Sigmoid colon (tissue), 7 donors: ENCODE measurements at regions of chr5 and their contacts with region 1.

Region 1: DNA sequence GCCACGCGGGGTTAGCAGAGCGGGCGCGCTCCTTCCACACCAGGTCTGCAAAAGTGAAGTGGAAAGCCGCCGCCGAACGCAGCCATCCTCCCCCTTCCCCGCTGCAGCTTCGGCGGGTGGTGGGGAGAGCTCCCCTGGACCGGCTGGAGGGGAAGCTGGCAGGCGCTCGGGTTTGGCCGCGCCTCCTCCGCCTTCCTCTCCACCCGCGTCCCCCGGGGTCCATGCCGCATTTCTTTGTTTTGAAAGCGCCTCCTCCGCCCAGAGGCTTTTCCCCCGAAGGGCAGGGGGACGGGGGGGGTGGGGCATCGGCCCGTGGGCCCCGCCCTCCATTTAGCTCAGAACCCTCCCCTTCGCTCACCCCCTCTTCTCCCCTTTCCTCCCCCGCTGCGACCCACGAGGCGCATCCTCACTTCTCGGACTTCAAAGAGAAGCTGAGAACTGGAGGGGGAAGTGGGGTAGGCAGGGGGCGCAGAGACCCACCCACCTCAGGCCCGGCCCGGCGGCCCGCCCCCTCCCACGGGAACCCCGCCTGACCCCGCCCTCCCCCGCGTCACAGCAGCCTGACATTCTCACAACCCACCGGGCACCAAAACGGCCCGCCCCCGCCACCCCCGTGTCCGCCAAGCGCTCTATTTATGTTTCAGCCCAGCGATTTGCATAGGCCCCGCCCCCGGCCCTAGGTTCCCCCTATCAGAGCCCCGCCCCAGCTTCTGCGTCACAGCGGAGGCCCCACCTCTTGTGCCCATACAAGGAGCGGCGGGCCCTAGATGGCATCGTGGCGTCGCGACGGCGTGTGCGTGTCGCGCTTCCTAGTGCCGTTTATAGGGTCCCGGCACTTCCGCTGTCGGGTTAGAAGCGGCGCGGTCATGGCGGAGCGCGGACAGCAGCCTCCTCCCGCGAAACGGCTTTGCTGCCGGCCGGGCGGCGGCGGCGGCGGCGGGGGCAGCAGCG is at the start of gene ZSWIM6:
- DNase-seq: peak; percentile 100
- H3K4me3 ChIP-seq: peak within 1 kb of the TSS; percentile 83 to 99 (median 97)
- H3K27ac ChIP-seq: peak within 1 kb of the TSS; percentile 91 to 99 (median 94)
- H3K4me1 ChIP-seq: peaks cover 0 to 52% (median 37%) of the 10 kb centered on the region in 4 donors
- H3K27me3 ChIP-seq: no peaks in the 10 kb centered on the region
- CTCF ChIP-seq: no peak
- EP300 ChIP-seq: peak in 2 of 4 donors; percentile 15 to 18
- POLR2A ChIP-seq: peak; percentile 82 to 90
- total RNA-seq, gene ZSWIM6: 11.3 to 17.7 (median 13.3) TPM

Region 2: GRCh38 chr5:60883229-60883628 is 448.5 kb before region 1 on chr5:
- intact Hi-C with region 1: no loop called
- DNase-seq: no peak
- H3K4me3 ChIP-seq: no peak overlapping the region
- H3K27ac ChIP-seq: no peak overlapping the region
- H3K4me1 ChIP-seq: no peaks in the 10 kb centered on the region
- H3K27me3 ChIP-seq: no peaks in the 10 kb centered on the region
- CTCF ChIP-seq: no peak
- EP300 ChIP-seq: no peak
- POLR2A ChIP-seq: no peak

Region 3: DNA sequence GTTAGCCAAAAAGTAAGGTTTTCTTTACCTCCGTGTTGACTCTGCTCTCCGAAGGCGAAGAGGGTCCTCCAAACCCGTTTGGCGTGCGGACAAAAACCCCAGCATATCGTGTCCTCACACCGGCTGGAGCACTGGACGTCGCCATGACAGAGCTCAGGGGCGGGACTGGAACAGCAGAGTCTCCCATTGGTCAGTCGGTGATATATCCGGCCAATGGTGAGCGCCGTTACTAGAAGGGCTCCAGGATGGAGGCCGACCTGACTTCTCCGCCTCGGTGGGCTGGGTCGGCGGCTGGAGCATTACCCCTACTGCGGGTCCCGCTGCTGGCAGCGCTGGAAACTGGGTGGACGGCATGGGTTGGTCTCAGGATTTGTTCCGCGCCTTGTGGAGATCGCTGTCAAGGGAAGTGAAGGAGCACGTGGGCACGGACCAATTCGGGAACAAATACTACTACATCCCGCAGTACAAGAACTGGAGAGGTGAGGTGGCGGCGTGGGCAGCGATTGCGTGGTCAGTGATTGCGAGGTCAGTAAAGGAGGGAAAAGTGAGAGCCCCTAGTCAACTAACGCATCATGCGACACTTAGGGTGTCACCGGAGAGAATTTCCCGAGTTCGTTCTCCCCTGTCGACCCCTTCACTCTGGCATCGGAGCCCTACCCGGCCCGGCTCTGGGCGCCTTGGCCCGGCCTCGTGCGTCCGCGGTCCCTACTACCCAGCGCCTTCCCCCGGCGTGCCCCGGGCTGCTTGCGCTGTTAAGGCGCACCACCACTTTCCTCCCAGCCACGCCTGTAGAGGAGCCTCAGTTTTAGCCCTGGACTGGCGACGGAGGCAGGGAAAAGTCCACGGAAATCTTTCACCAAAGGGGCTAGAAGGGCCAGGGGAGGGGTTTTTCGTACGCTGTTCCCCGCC is 386.5 kb before region 1 on chr5 and contains the starts of genes ERCC8 and NDUFAF2:
- intact Hi-C with region 1: loop called (anchors 5 kb)
- DNase-seq: peak; percentile 95
- H3K4me3 ChIP-seq: peak within 1 kb of the TSS; percentile 65 to 75 (median 71)
- H3K27ac ChIP-seq: peak within 1 kb of the TSS; percentile 85 to 87 (median 86)
- H3K4me1 ChIP-seq: peaks cover 0 to 25% (median 18%) of the 10 kb centered on the region in 4 donors
- H3K27me3 ChIP-seq: no peaks in the 10 kb centered on the region
- CTCF ChIP-seq: no peak
- EP300 ChIP-seq: no peak
- POLR2A ChIP-seq: peak; percentile 59 to 62
- total RNA-seq, gene ERCC8: 8.8 to 16.4 (median 14.2) TPM
- total RNA-seq, gene NDUFAF2: 33.5 to 45.1 (median 39.9) TPM

Region 4: GRCh38 chr5:61162010-61162831 is 169.5 kb before region 1 on chr5 and contains the start of gene SMIM15:
- intact Hi-C with region 1: loop called (anchors 2 kb)
- DNase-seq: peak; percentile 93
- H3K4me3 ChIP-seq: peak within 1 kb of the TSS; percentile 74 to 87 (median 77)
- H3K27ac ChIP-seq: peak within 1 kb of the TSS; percentile 85 to 90 (median 88)
- H3K4me1 ChIP-seq: peaks cover 0 to 35% (median 16%) of the 10 kb centered on the region in 4 donors
- H3K27me3 ChIP-seq: no peaks in the 10 kb centered on the region
- CTCF ChIP-seq: peak in 1 of 4 experiments; percentile 9
- EP300 ChIP-seq: no peak
- POLR2A ChIP-seq: peak; percentile 40 to 49
- total RNA-seq, gene SMIM15: 12.2 to 35.0 (median 21.2) TPM

Region 5: GRCh38 chr5:61280205-61280604 is 51.5 kb before region 1 on chr5:
- intact Hi-C with region 1: loop called (anchors 2 kb)
- DNase-seq: no peak
- H3K4me3 ChIP-seq: no peak overlapping the region
- H3K27ac ChIP-seq: peak overlapping the region in 1 of 4 donors; percentile 47
- H3K4me1 ChIP-seq: peaks cover 0 to 25% (median 19%) of the 10 kb centered on the region in 4 donors
- H3K27me3 ChIP-seq: no peaks in the 10 kb centered on the region
- CTCF ChIP-seq: no peak
- EP300 ChIP-seq: no peak
- POLR2A ChIP-seq: no peak

Region 6: DNA sequence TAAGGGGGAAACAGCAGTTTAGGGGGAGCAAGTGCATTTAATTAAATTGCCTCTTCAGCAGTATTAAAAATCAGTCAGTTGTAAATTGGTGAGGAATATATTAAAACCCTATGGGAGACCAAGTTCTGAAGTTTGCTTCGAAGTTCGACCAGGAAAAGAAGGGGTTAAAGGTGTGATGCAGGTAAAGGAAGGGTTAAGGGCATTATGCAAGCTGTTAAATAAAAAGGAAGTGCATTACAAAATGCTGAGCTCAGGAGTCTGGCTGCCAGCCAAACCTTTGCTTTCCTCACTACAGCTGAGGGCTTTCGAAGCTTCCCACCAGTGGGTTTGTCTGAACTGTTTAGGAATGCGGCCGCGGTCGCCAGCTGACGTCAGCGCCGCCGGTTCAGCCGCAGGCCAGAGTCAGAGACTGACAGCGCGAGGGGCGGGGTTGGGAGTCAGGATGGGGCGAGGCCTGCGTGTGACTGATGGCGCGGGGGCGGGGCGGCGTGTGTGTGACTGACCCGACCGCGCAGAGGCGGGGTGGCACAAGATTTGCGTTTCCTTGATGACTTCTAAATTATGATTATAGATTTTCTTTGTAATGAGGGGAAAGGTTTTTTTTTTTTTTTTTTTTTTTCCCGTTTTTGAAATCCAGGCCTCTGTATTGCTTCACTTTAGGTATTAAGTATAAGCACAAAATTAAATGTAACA is 76.9 kb after region 1 on chr5:
- intact Hi-C with region 1: loop called (anchors 2 kb)
- DNase-seq: peak; percentile 100
- H3K4me3 ChIP-seq: peak overlapping the region in 3 of 4 donors; percentile 19 to 33 (median 29)
- H3K27ac ChIP-seq: peak overlapping the region; percentile 62 to 82 (median 72)
- H3K4me1 ChIP-seq: peaks cover 0 to 72% (median 34%) of the 10 kb centered on the region in 4 donors
- H3K27me3 ChIP-seq: no peaks in the 10 kb centered on the region
- CTCF ChIP-seq: no peak
- EP300 ChIP-seq: peak; percentile 44 to 97 (median 84)
- POLR2A ChIP-seq: no peak

Region 7: DNA sequence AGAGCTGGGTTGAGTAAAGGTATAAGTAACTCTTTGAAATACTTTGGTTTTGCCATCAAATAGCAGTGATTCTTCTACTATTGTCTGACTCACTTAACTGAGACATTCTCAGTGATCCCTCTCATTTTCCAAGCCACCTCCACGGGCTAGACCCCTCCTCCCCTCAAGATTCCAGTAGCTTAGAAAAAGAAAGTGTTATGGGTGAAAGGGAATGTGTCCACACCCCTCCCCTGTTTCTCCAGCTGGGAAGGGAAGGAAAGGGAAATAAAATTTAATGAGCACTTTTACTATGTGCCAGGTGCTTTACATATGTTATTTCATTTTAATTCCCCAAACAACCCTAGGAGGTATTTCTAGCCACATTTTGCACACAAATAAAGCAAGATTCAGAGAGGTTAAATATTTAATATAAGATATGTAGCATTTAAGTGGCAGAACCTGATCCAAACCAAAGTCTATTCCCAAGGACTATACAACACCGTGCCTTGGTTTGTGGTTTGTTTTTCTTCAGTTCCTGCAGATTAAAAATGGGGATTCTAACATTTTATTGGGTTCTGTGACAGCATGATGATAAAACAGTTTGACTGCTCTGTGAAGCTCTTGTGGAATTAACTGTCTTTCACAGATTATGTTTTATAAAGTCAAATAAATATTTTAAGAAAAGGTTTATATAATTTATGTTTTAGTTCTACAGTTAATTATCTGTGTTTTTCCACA is 136.2 kb after region 1 on chr5:
- intact Hi-C with region 1: no loop called
- DNase-seq: no peak
- H3K4me3 ChIP-seq: no peak overlapping the region
- H3K27ac ChIP-seq: no peak overlapping the region
- H3K4me1 ChIP-seq: peaks cover 0 to 46% (median 36%) of the 10 kb centered on the region in 4 donors
- H3K27me3 ChIP-seq: no peaks in the 10 kb centered on the region
- CTCF ChIP-seq: no peak
- EP300 ChIP-seq: no peak
- POLR2A ChIP-seq: no peak

Region 8: GRCh38 chr5:61625681-61626621 is 294.3 kb after region 1 on chr5:
- intact Hi-C with region 1: loop called (anchors 2 kb)
- DNase-seq: peak; percentile 89
- H3K4me3 ChIP-seq: peak overlapping the region; percentile 45 to 82 (median 69)
- H3K27ac ChIP-seq: peak overlapping the region; percentile 81 to 93 (median 84)
- H3K4me1 ChIP-seq: peaks cover 0 to 27% (median 16%) of the 10 kb centered on the region in 4 donors
- H3K27me3 ChIP-seq: no peaks in the 10 kb centered on the region
- CTCF ChIP-seq: no peak
- EP300 ChIP-seq: peak in 1 of 4 donors; percentile 13
- POLR2A ChIP-seq: peak in 1 of 2 donors; percentile 13